ENCODE measurements at regions of chr17 and their contacts with region 1.

Region 1: GRCh38 chr17:7627250-7628121 is at the start of gene SAT2:
- DNase-seq: peak; percentile 84
- ATAC-seq: peak; percentile 90
- H3K4me3 ChIP-seq: peak within 1 kb of the TSS; percentile 85
- H3K27ac ChIP-seq: peak within 1 kb of the TSS; percentile 66
- H3K4me1 ChIP-seq: peaks cover 4 to 17% of the 10 kb centered on the region in 2 experiments
- H3K27me3 ChIP-seq: no peaks in the 10 kb centered on the region
- CTCF ChIP-seq: no peak
- POLR2A ChIP-seq: peak; percentile 34
- RAD21 ChIP-seq: no peak
- total RNA-seq, gene SAT2: 54.9 TPM

Region 2: GRCh38 chr17:7491583-7491982 is 135.9 kb before region 1 on chr17:
- CTCF ChIA-PET with region 1: no interaction called
- POLR2A ChIA-PET with region 1: no interaction called
- RAD21 ChIA-PET with region 1: no interaction called
- intact Hi-C with region 1: no loop called
- DNase-seq: no peak
- ATAC-seq: no peak
- H3K4me3 ChIP-seq: no peak overlapping the region
- H3K27ac ChIP-seq: no peak overlapping the region
- H3K4me1 ChIP-seq: peaks cover 0 to 6% of the 10 kb centered on the region in 2 experiments; a peak in 1 of 4 replicates
- H3K27me3 ChIP-seq: no peaks in the 10 kb centered on the region
- CTCF ChIP-seq: no peak
- POLR2A ChIP-seq: no peak
- RAD21 ChIP-seq: no peak

Region 3: DNA sequence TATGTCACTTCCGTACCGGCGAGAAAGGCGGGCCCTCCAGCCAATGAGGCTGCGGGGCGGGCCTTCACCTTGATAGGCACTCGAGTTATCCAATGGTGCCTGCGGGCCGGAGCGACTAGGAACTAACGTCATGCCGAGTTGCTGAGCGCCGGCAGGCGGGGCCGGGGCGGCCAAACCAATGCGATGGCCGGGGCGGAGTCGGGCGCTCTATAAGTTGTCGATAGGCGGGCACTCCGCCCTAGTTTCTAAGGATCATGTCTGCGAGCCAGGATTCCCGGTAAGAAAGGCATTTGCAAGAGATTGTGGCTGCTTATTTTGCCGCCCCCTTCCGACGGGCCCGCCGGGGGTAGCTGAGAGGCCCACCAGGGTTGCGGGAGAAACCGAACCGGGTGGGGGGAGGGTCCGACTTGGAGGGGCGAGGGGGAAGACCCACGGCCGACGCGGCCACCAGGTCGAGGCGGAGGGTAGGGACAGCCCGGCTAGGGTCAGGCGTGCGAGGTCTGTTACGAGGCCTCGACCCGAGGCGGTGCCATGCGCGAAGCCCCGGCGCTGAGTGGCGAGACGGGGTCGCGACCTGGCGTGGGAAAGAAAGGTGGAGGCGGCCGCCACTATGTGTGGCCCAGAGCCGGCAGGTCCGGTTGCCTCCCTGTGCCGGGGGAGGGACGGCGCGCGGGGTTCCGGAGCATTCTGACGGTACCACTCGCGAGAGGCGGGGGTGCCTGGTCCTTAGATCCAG is 54.7 kb before region 1 on chr17:
- CTCF ChIA-PET with region 1: no interaction called
- POLR2A ChIA-PET with region 1: no interaction called
- RAD21 ChIA-PET with region 1: no interaction called
- intact Hi-C with region 1: no loop called
- DNase-seq: peak; percentile 98
- ATAC-seq: peak; percentile 86
- H3K4me3 ChIP-seq: peak overlapping the region; percentile 94 to 100
- H3K27ac ChIP-seq: peak overlapping the region; percentile 97
- H3K4me1 ChIP-seq: peaks cover 5 to 58% of the 10 kb centered on the region in 2 experiments; a peak in 3 of 4 replicates
- H3K27me3 ChIP-seq: no peaks in the 10 kb centered on the region
- CTCF ChIP-seq: no peak
- POLR2A ChIP-seq: peak; percentile 99
- RAD21 ChIP-seq: no peak

Region 4: DNA sequence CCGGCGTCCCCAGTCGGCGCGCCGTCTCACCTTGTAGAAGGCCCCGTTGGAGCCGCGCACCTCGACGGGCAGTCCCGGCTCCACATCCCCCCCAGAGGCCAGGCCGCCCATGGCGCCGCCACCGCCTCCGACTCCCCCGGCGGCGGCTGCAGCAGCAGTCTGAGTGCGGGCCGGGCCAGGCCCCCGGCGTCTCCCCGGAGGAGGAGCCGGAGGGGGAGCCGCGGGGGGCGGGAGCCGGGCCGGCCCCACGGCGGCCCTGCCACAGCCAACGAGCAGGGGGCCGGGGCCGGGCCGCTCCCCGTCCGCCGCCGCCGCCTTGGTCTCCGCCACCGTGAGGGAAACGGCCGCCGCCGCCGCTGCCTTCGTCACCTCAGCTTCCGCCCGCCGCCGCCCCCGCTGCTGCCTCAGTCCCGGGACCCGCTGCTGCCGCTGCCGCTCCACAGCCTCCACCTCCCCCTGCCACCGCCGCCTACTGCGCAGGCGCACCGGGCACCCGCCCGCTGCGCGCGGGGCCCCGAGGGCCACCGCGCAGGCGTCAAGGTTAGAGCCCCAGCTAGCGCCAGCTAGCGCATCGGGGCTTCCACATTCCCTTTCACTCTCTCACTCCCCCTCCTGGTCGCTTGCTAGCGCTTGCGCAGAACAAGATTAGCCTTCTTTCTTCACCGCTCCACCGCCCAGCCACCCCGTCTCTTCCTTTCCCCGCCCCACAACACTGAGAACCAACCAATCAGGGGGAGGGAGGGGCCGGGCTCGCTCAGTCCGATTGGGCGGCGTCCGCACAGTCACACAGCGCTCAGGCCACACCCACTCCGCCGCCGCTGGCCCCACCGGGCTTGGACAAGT is 12.8 kb before region 1 on chr17 and contains the start of gene FXR2:
- CTCF ChIA-PET with region 1: interaction called, 8 read pairs
- POLR2A ChIA-PET with region 1: interaction called, 15 read pairs
- RAD21 ChIA-PET with region 1: no interaction called
- intact Hi-C with region 1: no loop called
- DNase-seq: peak; percentile 100
- ATAC-seq: peak; percentile 93
- H3K4me3 ChIP-seq: peak within 1 kb of the TSS; percentile 64 to 87
- H3K27ac ChIP-seq: peak within 1 kb of the TSS; percentile 96
- H3K4me1 ChIP-seq: peaks cover 12 to 22% of the 10 kb centered on the region in 2 experiments
- H3K27me3 ChIP-seq: no peaks in the 10 kb centered on the region
- CTCF ChIP-seq: peak; percentile 55 to 86 (median 65)
- POLR2A ChIP-seq: no peak
- RAD21 ChIP-seq: no peak
- total RNA-seq, gene FXR2: 49.7 TPM

Region 5: DNA sequence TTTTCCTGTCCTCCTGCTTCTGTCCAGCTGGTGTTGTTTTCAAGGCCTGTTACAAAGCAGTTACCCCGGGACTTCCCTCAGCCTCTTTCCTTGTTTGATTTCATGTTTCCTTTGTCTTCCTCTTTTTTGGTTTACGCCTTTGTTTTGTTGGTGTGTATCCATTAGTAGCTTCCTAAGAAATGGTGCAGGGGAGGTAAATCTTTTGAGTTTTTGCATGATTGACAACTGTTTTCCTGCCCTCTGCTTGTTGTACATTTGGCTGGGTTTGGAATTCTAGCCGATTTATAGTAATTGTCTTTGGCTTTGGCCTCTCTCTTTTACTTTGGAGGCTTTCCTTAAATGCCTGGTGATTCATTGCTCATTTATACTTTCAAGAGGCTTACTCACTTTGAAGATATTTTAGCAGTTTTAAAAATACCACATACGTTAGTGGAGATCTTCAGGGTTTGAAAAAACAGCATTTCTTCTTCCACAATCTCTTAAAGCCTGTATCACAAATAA is 122.9 kb after region 1 on chr17:
- CTCF ChIA-PET with region 1: no interaction called
- POLR2A ChIA-PET with region 1: no interaction called
- RAD21 ChIA-PET with region 1: no interaction called
- intact Hi-C with region 1: no loop called
- DNase-seq: no peak
- ATAC-seq: no peak; the same call in 1 of the 2 replicates
- H3K4me3 ChIP-seq: peak overlapping the region in 1 of 2 experiments; percentile 13; a peak in 1 of 4 replicates
- H3K27ac ChIP-seq: peak overlapping the region; percentile 41; the same call in 1 of the 2 replicates
- H3K4me1 ChIP-seq: peaks cover 22 to 43% of the 10 kb centered on the region in 2 experiments
- H3K27me3 ChIP-seq: no peaks in the 10 kb centered on the region
- CTCF ChIP-seq: no peak
- POLR2A ChIP-seq: no peak
- RAD21 ChIP-seq: no peak

Measured in HCT116 (cell line).